ENCODE measurements at regions of chr11 and their contacts with region 1.

Region 1: GRCh38 chr11:72430741-72431570 is 3.4 kb downstream of the CLPB start:
- DNase-seq: peak; percentile 63 to 68
- H3K4me3 ChIP-seq: no peak overlapping the region
- H3K4me3 Mint-ChIP-seq: no peak overlapping the region
- H3K27ac Mint-ChIP-seq: no peak overlapping the region
- H3K4me1 ChIP-seq: peaks cover 9% of the 10 kb centered on the region; the same call in 1 of the 2 replicates
- H3K4me1 Mint-ChIP-seq: peaks cover 18% of the 10 kb centered on the region
- H3K27me3 ChIP-seq: no peaks in the 10 kb centered on the region
- H3K27me3 Mint-ChIP-seq: no peaks in the 10 kb centered on the region
- CTCF ChIP-seq: peak; percentile 93 to 94

Region 2: GRCh38 chr11:72080256-72080974 is 350.5 kb before region 1 on chr11 and contains the starts of genes LRRC51 and NUMA1:
- CTCF ChIA-PET with region 1: interaction called, 3 read pairs
- POLR2A ChIA-PET with region 1: no interaction called
- intact Hi-C with region 1: loop called (anchors 5 kb)
- DNase-seq: peak; percentile 100
- H3K4me3 ChIP-seq: peak within 1 kb of the TSS; percentile 92
- H3K4me3 Mint-ChIP-seq: peak within 1 kb of the TSS; percentile 86
- H3K27ac Mint-ChIP-seq: peak within 1 kb of the TSS; percentile 99
- H3K4me1 ChIP-seq: peaks cover 19% of the 10 kb centered on the region
- H3K4me1 Mint-ChIP-seq: peaks cover 28% of the 10 kb centered on the region
- H3K27me3 ChIP-seq: no peaks in the 10 kb centered on the region
- H3K27me3 Mint-ChIP-seq: no peaks in the 10 kb centered on the region
- CTCF ChIP-seq: no peak
- total RNA-seq, gene LRRC51: 13.7 and 13.8 TPM in 2 replicates
- total RNA-seq, gene NUMA1: 182 and 190 TPM in 2 replicates

Region 3: GRCh38 chr11:72238040-72238450 is 192.9 kb before region 1 on chr11:
- CTCF ChIA-PET with region 1: interaction called, 5 read pairs
- POLR2A ChIA-PET with region 1: no interaction called
- intact Hi-C with region 1: loop called (anchors 5 kb)
- DNase-seq: peak; percentile 68 to 72
- H3K4me3 ChIP-seq: no peak overlapping the region
- H3K4me3 Mint-ChIP-seq: no peak overlapping the region
- H3K27ac Mint-ChIP-seq: no peak overlapping the region
- H3K4me1 ChIP-seq: peaks cover 24% of the 10 kb centered on the region
- H3K4me1 Mint-ChIP-seq: peaks cover 14% of the 10 kb centered on the region
- H3K27me3 ChIP-seq: no peaks in the 10 kb centered on the region
- H3K27me3 Mint-ChIP-seq: no peaks in the 10 kb centered on the region
- CTCF ChIP-seq: peak; percentile 65 to 72

Region 4: GRCh38 chr11:72352859-72353551 is 78.0 kb before region 1 on chr11:
- CTCF ChIA-PET with region 1: interaction called, 83 read pairs
- POLR2A ChIA-PET with region 1: no interaction called
- intact Hi-C with region 1: loop called (anchors 1 kb)
- DNase-seq: peak; percentile 46 to 60
- H3K4me3 ChIP-seq: no peak overlapping the region
- H3K4me3 Mint-ChIP-seq: no peak overlapping the region
- H3K27ac Mint-ChIP-seq: no peak overlapping the region
- H3K4me1 ChIP-seq: peaks cover 7% of the 10 kb centered on the region; the same call in 1 of the 2 replicates
- H3K4me1 Mint-ChIP-seq: peaks cover 9% of the 10 kb centered on the region
- H3K27me3 ChIP-seq: no peaks in the 10 kb centered on the region
- H3K27me3 Mint-ChIP-seq: no peaks in the 10 kb centered on the region
- CTCF ChIP-seq: peak; percentile 21 to 35

Region 5: GRCh38 chr11:72378704-72379384 is 52.1 kb before region 1 on chr11:
- CTCF ChIA-PET with region 1: no interaction called
- POLR2A ChIA-PET with region 1: no interaction called
- intact Hi-C with region 1: no loop called
- DNase-seq: no peak
- H3K4me3 ChIP-seq: no peak overlapping the region
- H3K4me3 Mint-ChIP-seq: no peak overlapping the region
- H3K27ac Mint-ChIP-seq: no peak overlapping the region
- H3K4me1 ChIP-seq: no peaks in the 10 kb centered on the region
- H3K4me1 Mint-ChIP-seq: no peaks in the 10 kb centered on the region
- H3K27me3 ChIP-seq: no peaks in the 10 kb centered on the region
- H3K27me3 Mint-ChIP-seq: no peaks in the 10 kb centered on the region
- CTCF ChIP-seq: no peak

Region 6: DNA sequence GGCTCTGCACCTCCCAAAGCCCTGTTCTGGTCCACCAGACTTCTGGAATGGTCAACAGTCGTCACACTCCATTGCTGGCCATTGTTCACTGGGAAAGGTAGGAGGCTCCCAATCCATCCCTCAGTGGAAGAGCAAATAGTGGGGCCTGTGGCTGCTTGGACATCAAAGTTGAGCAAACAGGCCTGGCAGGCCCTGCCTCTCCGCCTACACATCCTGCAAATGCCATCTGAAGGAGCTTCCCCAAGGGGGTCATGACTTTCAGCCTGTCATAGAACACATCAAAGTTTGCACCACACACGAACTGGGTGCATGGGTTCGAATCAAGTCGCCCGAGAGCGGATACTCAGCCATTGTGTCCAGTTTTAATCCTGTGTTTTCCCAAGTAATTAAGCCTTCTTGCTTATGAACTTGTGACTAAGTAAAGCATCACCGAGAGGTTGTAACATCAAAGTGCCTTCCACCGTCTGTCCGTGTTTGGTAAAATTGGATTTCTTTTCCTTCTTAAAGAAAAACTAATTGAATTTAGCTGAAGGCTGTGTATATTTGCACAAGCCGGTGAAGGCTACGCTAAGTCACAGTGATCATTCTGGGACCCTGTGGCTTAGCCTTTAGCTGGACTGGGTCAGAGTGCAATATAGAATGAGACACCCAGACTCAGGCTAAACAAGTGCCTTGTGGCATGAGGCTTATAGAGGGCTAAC is 32.7 kb before region 1 on chr11:
- CTCF ChIA-PET with region 1: interaction called, 12 read pairs
- POLR2A ChIA-PET with region 1: interaction called, 3 read pairs
- intact Hi-C with region 1: no loop called
- DNase-seq: peak; percentile 87 to 90
- H3K4me3 ChIP-seq: no peak overlapping the region
- H3K4me3 Mint-ChIP-seq: no peak overlapping the region
- H3K27ac Mint-ChIP-seq: peak overlapping the region; percentile 56
- H3K4me1 ChIP-seq: peaks cover 23% of the 10 kb centered on the region
- H3K4me1 Mint-ChIP-seq: peaks cover 9% of the 10 kb centered on the region
- H3K27me3 ChIP-seq: no peaks in the 10 kb centered on the region
- H3K27me3 Mint-ChIP-seq: no peaks in the 10 kb centered on the region
- CTCF ChIP-seq: no peak

Region 7: DNA sequence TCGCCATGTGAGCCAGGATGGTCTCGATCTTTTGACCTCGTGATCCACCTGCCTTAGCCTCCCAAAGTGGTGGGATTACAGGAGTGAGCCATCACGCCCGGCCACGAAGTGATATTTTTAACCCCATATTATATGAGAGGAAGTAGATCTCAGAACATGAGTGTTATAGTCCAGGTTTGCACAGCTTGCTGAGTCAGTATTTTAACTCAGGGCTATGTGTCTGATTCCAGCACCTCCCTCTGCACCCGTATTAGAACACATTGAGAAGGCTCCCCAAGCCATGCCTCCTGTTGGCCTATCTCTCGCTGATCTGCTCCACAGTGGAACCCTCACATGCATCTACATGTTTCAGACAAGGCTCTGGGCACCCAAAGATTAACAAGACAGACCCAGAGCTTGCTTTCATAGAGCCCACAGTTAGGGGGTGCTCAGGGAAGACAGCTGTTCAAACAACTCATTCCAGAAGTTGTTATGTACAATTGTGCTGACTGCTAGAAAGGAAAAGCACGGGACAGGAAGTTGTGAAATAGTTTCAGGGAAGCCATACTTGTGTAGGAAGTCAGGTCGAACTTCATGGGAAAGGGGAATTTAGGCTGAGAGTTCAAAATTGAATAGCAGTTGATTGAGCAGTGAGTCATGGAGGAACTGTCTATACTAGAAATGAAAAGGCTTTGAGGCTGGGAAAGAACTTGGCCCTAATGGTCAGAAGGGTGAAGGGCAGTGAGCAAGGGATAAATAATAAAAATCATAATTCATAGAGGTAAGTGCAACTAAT is 52.6 kb after region 1 on chr11:
- CTCF ChIA-PET with region 1: interaction called, 12 read pairs
- POLR2A ChIA-PET with region 1: no interaction called
- intact Hi-C with region 1: no loop called
- DNase-seq: no peak
- H3K4me3 ChIP-seq: no peak overlapping the region
- H3K4me3 Mint-ChIP-seq: no peak overlapping the region
- H3K27ac Mint-ChIP-seq: no peak overlapping the region
- H3K4me1 ChIP-seq: no peaks in the 10 kb centered on the region
- H3K4me1 Mint-ChIP-seq: peaks cover 16% of the 10 kb centered on the region
- H3K27me3 ChIP-seq: no peaks in the 10 kb centered on the region
- H3K27me3 Mint-ChIP-seq: no peaks in the 10 kb centered on the region
- CTCF ChIP-seq: no peak

Measured in Caco-2 (cell line).